ENCODE measurements at regions of chr16 and their contacts with region 1.

Region 1: GRCh38 chr16:24504472-24505345 is 34.7 kb upstream of the RBBP6 start:
- DNase-seq: peak; percentile 64
- ATAC-seq: peak; percentile 95
- H3K4me3 Mint-ChIP-seq: no peak overlapping the region
- H3K27ac Mint-ChIP-seq: no peak overlapping the region
- H3K4me1 Mint-ChIP-seq: no peaks in the 10 kb centered on the region
- H3K27me3 Mint-ChIP-seq: peaks cover 11% of the 10 kb centered on the region
- CTCF ChIP-seq: peak; percentile 48

Region 2: GRCh38 chr16:24054741-24055491 is 449.8 kb before region 1 on chr16:
- CTCF ChIA-PET with region 1: interaction called, 14 read pairs
- POLR2A ChIA-PET with region 1: no interaction called
- DNase-seq: peak; percentile 46
- ATAC-seq: peak; percentile 76
- H3K4me3 Mint-ChIP-seq: no peak overlapping the region
- H3K27ac Mint-ChIP-seq: peak overlapping the region; percentile 35; the same call in 1 of the 2 replicates
- H3K4me1 Mint-ChIP-seq: peaks cover 68% of the 10 kb centered on the region
- H3K27me3 Mint-ChIP-seq: no peaks in the 10 kb centered on the region; the same call in 1 of the 2 replicates
- CTCF ChIP-seq: no peak

Region 3: DNA sequence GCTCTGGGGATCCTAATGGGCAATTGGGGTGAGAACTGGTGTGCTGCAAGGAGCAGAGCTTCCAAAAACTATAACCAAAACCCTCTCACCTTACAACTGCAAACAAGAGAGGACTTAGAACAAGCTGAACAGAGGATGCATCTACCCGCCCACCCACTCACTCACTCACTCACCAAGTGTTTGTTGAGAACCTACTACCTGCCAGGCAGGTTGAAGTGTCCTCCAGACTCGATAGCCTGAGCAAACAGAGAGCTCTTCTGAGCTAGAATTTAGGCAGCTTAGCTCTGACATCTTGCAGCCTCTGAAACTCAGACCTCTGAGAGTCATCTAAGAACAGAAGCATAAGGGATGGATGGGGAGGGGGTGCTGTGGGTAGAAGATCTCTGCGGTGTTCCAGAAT is 207.3 kb before region 1 on chr16:
- CTCF ChIA-PET with region 1: interaction called, 10 read pairs
- POLR2A ChIA-PET with region 1: no interaction called
- DNase-seq: no peak
- ATAC-seq: no peak
- H3K4me3 Mint-ChIP-seq: no peak overlapping the region
- H3K27ac Mint-ChIP-seq: no peak overlapping the region
- H3K4me1 Mint-ChIP-seq: no peaks in the 10 kb centered on the region
- H3K27me3 Mint-ChIP-seq: peaks cover 4% of the 10 kb centered on the region
- CTCF ChIP-seq: no peak

Region 4: GRCh38 chr16:24336998-24337397 is 167.7 kb before region 1 on chr16:
- CTCF ChIA-PET with region 1: interaction called, 20 read pairs
- POLR2A ChIA-PET with region 1: no interaction called
- DNase-seq: no peak
- ATAC-seq: no peak
- H3K4me3 Mint-ChIP-seq: no peak overlapping the region
- H3K27ac Mint-ChIP-seq: no peak overlapping the region
- H3K4me1 Mint-ChIP-seq: no peaks in the 10 kb centered on the region
- H3K27me3 Mint-ChIP-seq: no peaks in the 10 kb centered on the region
- CTCF ChIP-seq: no peak

Region 5: GRCh38 chr16:24493859-24494258 is 10.8 kb before region 1 on chr16:
- CTCF ChIA-PET with region 1: interaction called, 19 read pairs
- POLR2A ChIA-PET with region 1: no interaction called
- DNase-seq: no peak
- ATAC-seq: no peak
- H3K4me3 Mint-ChIP-seq: no peak overlapping the region
- H3K27ac Mint-ChIP-seq: no peak overlapping the region
- H3K4me1 Mint-ChIP-seq: peaks cover 7% of the 10 kb centered on the region
- H3K27me3 Mint-ChIP-seq: peaks cover 12% of the 10 kb centered on the region
- CTCF ChIP-seq: no peak

Region 6: GRCh38 chr16:24583494-24583893 is 78.8 kb after region 1 on chr16:
- CTCF ChIA-PET with region 1: no interaction called
- POLR2A ChIA-PET with region 1: no interaction called
- DNase-seq: no peak
- ATAC-seq: no peak
- H3K4me3 Mint-ChIP-seq: no peak overlapping the region
- H3K27ac Mint-ChIP-seq: no peak overlapping the region
- H3K4me1 Mint-ChIP-seq: peaks cover 11% of the 10 kb centered on the region
- H3K27me3 Mint-ChIP-seq: no peaks in the 10 kb centered on the region
- CTCF ChIP-seq: no peak

Measured in WTC11 (cell line).